AG04450 (cell line): ENCODE measurements at regions of chr19 and their contacts with region 1.

Region 1: DNA sequence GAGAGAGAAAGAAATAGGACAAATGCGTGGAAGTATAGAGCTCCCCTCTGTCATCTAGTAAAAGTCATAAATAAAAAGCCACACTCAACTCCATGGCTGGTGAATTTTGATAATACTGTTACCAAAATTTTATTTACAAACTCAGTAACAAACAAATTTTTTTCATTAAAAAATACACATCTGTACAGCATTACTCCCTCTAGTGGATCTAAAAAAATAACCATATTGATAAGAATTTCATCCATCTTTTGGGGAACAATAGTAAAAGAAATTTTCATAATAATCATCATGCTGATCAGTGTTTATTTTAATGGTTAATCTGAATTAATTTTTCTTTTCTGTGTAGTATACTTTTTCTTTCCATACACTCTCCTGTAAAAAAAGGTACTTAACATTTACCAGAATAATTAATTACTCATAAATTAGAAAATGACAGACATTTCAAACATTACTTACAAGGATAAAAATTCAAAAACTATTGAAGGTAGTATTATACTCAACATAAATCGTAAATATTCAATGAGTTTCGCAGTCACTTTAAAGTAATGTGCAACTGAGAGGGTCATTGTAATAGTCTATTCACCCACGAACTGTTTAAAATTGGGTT is 173.5 kb upstream of the LSM14A start:
- DNase-seq: no peak
- H3K4me3 ChIP-seq: no peak overlapping the region
- H3K27ac ChIP-seq: no peak overlapping the region
- H3K27me3 ChIP-seq: peaks cover 2% of the 10 kb centered on the region
- CTCF ChIP-seq: peak; percentile 46

Region 2: GRCh38 chr19:33778089-33778791 is 220.6 kb before region 1 on chr19:
- CTCF ChIA-PET with region 1: interaction called, 132 read pairs
- POLR2A ChIA-PET with region 1: no interaction called
- DNase-seq: no peak
- H3K4me3 ChIP-seq: no peak overlapping the region
- H3K27ac ChIP-seq: peak overlapping the region; percentile 11
- H3K27me3 ChIP-seq: peaks cover 11% of the 10 kb centered on the region
- CTCF ChIP-seq: peak; percentile 100

Region 3: GRCh38 chr19:33785795-33786194 is 213.0 kb before region 1 on chr19:
- CTCF ChIA-PET with region 1: interaction called, 132 read pairs
- POLR2A ChIA-PET with region 1: no interaction called
- DNase-seq: no peak
- H3K4me3 ChIP-seq: no peak overlapping the region
- H3K27ac ChIP-seq: peak overlapping the region; percentile 39
- H3K27me3 ChIP-seq: peaks cover 2% of the 10 kb centered on the region
- CTCF ChIP-seq: no peak

Region 4: DNA sequence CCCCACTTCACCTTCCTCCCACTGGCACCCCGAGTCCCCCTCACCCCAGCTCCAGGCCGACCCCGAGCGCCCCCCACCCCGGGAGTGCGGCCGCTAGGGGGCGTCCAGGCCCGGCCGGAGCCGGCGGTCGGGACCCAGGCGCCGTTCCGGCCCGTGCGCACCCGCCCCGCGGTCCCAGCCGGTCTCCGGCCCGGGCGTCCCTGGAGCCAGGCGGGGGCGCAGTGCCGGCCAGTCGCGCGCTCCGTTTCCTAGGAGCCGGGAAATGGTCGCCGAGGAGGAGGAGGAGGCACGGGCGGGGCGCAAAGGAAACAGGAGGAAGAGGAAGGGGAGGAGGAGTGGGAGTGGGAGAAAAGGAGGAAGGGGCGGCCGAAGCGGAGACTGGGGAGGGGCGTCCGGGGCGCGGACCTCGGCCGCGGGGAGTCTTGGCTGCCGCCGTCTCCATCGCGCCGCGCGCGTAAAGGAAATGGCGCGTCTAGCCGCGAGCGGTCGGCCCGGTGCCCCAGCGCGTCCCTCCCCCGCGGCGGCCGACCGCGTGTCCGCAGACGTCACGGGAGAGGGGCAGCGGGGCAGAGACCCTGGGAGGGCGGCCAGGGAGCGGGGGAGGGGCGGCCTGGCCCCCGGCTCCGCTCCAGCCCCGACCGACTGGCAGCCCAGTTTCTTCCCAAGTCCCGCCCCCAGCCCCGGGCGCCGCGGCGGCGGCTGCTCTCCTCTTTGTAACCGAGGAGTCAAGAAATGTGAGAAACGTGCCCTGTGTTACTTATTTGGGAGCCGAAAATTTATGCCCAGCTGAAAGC is 203.3 kb before region 1 on chr19:
- CTCF ChIA-PET with region 1: interaction called, 30 read pairs
- POLR2A ChIA-PET with region 1: no interaction called
- DNase-seq: no peak
- H3K4me3 ChIP-seq: peak overlapping the region; percentile 70
- H3K27ac ChIP-seq: peak overlapping the region; percentile 80
- H3K27me3 ChIP-seq: peaks cover 8% of the 10 kb centered on the region
- CTCF ChIP-seq: peak; percentile 63

Region 5: GRCh38 chr19:33868788-33869412 is 129.9 kb before region 1 on chr19:
- CTCF ChIA-PET with region 1: no interaction called
- POLR2A ChIA-PET with region 1: no interaction called
- DNase-seq: no peak
- H3K4me3 ChIP-seq: no peak overlapping the region
- H3K27ac ChIP-seq: no peak overlapping the region
- H3K27me3 ChIP-seq: peaks cover 8% of the 10 kb centered on the region
- CTCF ChIP-seq: no peak

Region 6: GRCh38 chr19:33905937-33906576 is 92.8 kb before region 1 on chr19:
- CTCF ChIA-PET with region 1: no interaction called
- POLR2A ChIA-PET with region 1: no interaction called
- DNase-seq: no peak
- H3K4me3 ChIP-seq: 0 out of 2 replicates have a peak overlapping the region, but pooled peaks have one; percentile 4
- H3K27ac ChIP-seq: no peak overlapping the region
- H3K27me3 ChIP-seq: peaks cover 25% of the 10 kb centered on the region
- CTCF ChIP-seq: no peak

Region 7: DNA sequence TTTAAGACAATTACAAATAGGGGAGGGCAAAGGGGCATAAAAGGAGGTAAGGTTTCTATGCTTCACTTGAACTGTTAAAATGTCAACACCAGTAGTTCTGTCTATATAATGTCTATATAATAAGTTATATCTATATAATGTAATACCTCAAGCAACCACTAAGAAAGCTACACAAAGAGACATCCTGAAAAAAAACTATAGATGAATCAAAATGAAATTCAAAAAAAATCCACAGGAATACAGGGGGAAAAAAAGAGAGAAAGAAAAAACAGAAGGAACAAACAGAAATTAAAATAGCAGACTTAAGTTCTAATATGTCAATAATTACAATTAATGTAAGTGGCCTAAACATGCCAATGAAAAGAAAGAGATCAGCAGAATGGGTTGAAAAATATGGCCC is 16.1 kb before region 1 on chr19:
- CTCF ChIA-PET with region 1: interaction called, 16 read pairs
- POLR2A ChIA-PET with region 1: no interaction called
- DNase-seq: no peak
- H3K4me3 ChIP-seq: no peak overlapping the region
- H3K27ac ChIP-seq: no peak overlapping the region
- H3K27me3 ChIP-seq: no peaks in the 10 kb centered on the region
- CTCF ChIP-seq: no peak

Region 8: DNA sequence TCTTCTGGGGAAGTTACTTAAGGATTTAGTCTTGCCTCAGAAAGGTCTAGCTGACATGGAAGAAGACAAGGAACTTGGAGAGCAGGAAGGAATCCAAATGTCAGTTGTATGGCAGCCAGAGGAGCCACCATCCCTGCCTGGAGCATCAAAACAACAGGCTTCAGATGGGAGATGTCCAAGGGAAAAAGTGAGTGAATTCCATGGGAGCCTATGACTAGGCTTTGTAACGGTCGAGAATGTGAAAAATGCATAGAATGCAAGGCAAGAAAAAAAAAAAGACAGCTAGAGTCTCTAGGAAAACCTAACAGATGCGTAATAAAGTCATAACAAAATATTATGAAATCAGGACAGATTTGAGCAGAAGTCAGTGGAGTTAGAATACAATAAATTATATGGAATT is 10.3 kb before region 1 on chr19:
- CTCF ChIA-PET with region 1: interaction called, 16 read pairs
- POLR2A ChIA-PET with region 1: no interaction called
- DNase-seq: no peak
- H3K4me3 ChIP-seq: no peak overlapping the region
- H3K27ac ChIP-seq: no peak overlapping the region
- H3K27me3 ChIP-seq: no peaks in the 10 kb centered on the region
- CTCF ChIP-seq: no peak

Region 9: DNA sequence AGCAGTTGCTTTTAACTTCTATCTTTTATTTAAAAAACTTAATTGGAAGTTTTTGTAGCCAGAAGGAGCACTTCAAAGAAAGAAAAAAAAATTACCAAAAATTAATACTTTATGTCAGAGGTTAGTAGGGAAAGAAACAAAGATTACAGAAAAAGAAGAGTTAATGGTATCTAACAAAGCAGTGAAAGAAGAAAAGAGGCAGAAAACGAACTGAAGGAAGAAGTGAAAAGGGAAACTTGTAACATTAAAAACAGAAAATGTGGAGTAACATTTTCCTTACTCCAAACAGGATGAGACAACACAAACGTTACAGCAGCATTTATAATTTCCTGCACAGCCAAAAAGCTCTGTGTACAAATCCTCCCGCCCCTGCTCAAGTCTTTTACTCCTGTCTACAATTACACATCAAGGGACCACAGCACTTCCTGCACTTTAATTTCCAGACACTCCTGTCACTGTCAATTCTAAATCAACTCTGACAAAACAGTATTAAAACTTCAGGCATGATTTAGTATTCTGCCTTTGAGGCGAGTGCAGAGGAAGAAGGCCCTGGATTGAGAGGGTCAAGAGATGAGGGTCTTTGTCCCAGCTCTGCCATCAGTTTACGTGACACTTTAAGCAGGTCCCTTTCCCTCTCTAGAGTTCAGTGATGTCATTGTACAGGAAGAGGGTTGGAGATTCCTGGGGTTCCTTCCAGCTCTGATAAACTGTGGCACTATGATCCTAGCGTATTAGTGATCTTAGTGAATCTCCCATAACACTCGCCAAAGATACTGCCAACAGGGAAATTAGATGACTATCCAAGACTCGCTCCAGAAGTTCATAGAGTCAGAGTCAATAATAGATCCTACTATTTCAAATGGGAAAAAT is 120.3 kb after region 1 on chr19:
- CTCF ChIA-PET with region 1: no interaction called
- POLR2A ChIA-PET with region 1: no interaction called
- DNase-seq: no peak
- H3K4me3 ChIP-seq: no peak overlapping the region
- H3K27ac ChIP-seq: no peak overlapping the region
- H3K27me3 ChIP-seq: peaks cover 3% of the 10 kb centered on the region
- CTCF ChIP-seq: no peak